HepG2 (cell line): ENCODE measurements at regions of chr6 and their contacts with region 1.

Region 1: GRCh38 chr6:40352006-40352405 is 235.2 kb downstream of the LRFN2 start:
- DNase-seq: no peak
- ATAC-seq: no peak
- H3K4me3 ChIP-seq: no peak overlapping the region
- H3K27ac ChIP-seq: no peak overlapping the region
- H3K4me1 ChIP-seq: no peaks in the 10 kb centered on the region
- H3K27me3 ChIP-seq: no peaks in the 10 kb centered on the region
- CTCF ChIP-seq: no peak
- EP300 ChIP-seq: no peak
- POLR2A ChIP-seq: no peak
- RAD21 ChIP-seq: no peak

Region 2: DNA sequence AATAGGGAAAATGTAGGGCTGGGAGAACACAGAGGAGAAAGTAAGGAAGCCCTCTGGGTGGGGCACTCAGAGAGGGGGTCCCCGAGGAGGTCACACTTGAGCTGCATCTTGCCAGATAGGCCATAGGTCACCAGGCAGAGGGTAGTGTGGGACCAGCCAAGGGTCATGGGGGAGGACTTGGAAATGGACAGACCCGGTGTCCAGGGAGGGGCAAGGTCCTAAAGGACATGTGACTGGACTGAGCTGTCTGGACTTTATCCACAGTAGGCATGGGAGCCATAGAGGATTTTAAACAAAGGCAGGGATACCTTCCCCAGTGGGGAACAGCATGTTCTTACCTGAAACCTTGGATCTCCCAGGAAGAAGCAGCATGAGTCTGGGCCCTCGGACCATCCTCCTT is 31.6 kb before region 1 on chr6:
- CTCF ChIA-PET with region 1: no interaction called
- POLR2A ChIA-PET with region 1: no interaction called
- in situ Hi-C with region 1: no loop called
- intact Hi-C with region 1: loop called (anchors 1 kb)
- DNase-seq: no peak
- ATAC-seq: no peak
- H3K4me3 ChIP-seq: no peak overlapping the region
- H3K27ac ChIP-seq: no peak overlapping the region
- H3K4me1 ChIP-seq: no peaks in the 10 kb centered on the region
- H3K27me3 ChIP-seq: peaks cover 3 to 17% of the 10 kb centered on the region in 2 experiments; a peak in 3 of 5 replicates
- CTCF ChIP-seq: no peak
- EP300 ChIP-seq: no peak
- POLR2A ChIP-seq: no peak
- RAD21 ChIP-seq: no peak

Region 3: DNA sequence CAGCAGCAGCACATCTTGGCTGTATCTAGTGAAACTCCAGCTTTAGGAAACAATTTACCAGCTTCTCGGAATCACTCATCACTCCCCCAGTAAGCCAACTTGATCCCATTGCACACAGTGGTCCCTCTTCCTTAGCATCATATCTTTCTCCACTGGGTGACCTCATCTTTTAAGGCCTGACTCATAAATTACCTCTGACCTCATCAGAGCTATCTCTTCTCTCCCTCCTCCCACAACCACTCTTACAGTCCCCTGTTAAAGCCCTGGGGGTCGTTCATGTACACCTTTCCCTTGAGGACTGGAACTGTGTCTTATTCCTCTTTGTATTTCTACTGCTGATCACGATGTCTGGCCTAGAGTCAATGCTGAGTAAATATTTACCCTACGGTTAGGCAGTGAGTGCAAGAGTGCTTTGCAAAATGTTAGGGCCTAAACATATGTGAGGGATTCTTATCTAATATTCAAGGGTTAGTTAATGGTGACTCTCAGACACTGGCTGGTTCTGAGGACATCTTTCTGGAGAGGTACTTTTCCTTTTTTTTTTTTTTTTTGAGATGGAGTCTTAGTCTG is 48.0 kb after region 1 on chr6:
- CTCF ChIA-PET with region 1: no interaction called
- POLR2A ChIA-PET with region 1: no interaction called
- in situ Hi-C with region 1: no loop called
- intact Hi-C with region 1: no loop called
- DNase-seq: no peak
- ATAC-seq: peak; percentile 63
- H3K4me3 ChIP-seq: no peak overlapping the region
- H3K27ac ChIP-seq: no peak overlapping the region
- H3K4me1 ChIP-seq: peaks cover 5% of the 10 kb centered on the region; the same call in 1 of the 2 replicates
- H3K27me3 ChIP-seq: no peaks in the 10 kb centered on the region
- CTCF ChIP-seq: no peak
- EP300 ChIP-seq: no peak
- POLR2A ChIP-seq: no peak
- RAD21 ChIP-seq: no peak